RWPE1 (cell line): ENCODE measurements at regions of chr6 and their contacts with region 1.

Region 1: DNA sequence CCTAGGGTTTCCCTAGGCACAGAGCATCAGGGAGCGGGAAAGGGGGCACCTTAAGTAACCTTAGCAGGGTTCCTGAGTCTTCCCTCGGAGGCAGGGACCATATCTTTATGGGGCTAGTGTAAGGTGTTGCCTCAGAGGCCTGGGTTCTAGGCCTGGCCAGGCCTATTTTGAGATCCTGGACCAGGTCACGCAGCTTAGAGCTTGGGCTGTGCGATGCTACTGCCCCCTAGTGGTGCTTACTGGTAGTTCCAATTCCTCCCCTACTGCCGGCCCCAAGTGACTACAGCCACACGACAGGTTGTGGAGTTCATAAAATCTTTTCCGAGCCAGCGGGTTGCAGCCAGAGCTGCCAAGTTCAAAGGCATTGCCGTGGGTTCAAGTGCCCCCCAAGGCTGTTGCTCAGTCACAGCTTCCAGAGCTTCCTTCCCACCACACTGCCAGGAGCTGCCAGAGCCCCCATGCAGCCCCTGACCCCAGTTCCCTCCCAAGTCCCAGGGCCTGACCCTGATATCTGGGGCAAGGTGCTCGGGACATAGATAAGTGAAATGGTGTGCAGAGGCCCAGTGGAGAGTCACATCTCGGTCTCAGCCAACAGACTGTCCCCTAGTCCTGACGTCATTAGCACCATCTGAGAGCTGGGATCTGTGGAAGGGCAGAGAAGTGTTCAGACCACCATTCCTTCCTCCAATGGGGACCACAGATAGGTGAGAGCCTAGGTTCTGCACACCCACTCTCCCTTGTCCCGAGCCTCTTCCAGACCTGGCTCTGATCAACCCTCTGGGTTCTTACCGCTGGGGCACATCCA is 3.3 kb downstream of the LRRC73 start:
- DNase-seq: peak; percentile 69
- H3K27ac ChIP-seq: peak overlapping the region; percentile 36
- CTCF ChIP-seq: peak; percentile 94

Region 2: GRCh38 chr6:43263314-43264178 is 243.3 kb before region 1 on chr6:
- CTCF ChIA-PET with region 1: interaction called, 16 read pairs
- POLR2A ChIA-PET with region 1: no interaction called
- DNase-seq: peak; percentile 80
- H3K27ac ChIP-seq: no peak overlapping the region
- CTCF ChIP-seq: peak; percentile 87

Region 3: GRCh38 chr6:43454696-43455530 is 52.0 kb before region 1 on chr6:
- CTCF ChIA-PET with region 1: interaction called, 13 read pairs
- POLR2A ChIA-PET with region 1: no interaction called
- DNase-seq: peak; percentile 50
- H3K27ac ChIP-seq: peak overlapping the region; percentile 90
- CTCF ChIP-seq: peak; percentile 57; the same call in 1 of the 2 replicates

Region 4: GRCh38 chr6:43496370-43497128 is 10.3 kb before region 1 on chr6:
- CTCF ChIA-PET with region 1: interaction called, 39 read pairs
- POLR2A ChIA-PET with region 1: interaction called, 4 read pairs
- DNase-seq: peak; percentile 93
- H3K27ac ChIP-seq: peak overlapping the region; percentile 99
- CTCF ChIP-seq: peak; percentile 90

Region 5: DNA sequence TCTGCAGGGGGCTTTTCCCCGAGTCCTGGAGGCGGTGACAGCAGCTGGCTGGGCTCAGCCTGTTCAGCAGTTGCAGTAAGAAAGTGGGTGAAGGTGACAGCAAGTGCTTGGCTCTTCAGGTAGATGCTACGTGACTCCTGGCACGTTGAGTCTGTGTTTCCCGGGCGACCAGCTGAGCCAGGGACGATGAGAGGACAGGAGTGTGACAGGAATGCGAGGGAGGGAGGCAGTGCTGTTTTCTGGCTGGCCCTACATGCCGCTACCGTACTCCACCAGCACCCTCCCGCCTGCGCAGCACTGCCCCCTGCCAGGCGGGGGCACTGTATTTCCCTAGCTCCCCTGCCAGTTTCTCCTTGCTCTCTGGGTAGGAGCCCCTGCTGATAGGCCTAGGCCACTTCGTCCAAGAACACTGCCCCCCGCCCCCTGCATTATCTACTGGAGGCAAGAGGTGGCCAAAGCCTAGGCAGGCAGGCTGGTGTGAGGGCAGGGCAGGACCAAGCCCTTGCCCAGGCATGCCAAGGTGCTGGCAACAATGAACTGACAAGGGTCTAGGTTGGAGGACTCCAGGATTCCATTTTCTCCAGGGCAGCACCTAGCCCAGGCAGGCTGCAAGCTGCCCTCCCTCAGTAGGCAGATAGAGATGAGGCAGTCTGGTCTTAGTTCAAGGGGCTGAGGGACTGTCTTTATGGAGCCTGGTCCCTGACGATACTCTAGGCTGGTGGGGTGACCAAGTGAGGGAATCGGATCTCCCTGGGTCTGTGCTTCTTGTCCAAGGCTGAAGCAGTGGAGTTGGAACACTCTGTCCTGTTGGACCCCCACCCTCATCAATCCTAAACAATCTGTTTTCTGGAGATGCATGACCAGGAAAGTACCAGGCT is 161.5 kb after region 1 on chr6:
- CTCF ChIA-PET with region 1: no interaction called
- POLR2A ChIA-PET with region 1: no interaction called
- DNase-seq: no peak
- H3K27ac ChIP-seq: peak overlapping the region; percentile 77
- CTCF ChIP-seq: no peak; the same call in 1 of the 2 replicates